SK-N-SH (cell line): ENCODE measurements at regions of chr10 and their contacts with region 1.

Region 1: GRCh38 chr10:42970451-42971250 is 106.2 kb upstream of the RET start:
- DNase-seq: peak; percentile 90
- H3K4me3 ChIP-seq: no peak overlapping the region
- H3K27ac ChIP-seq: peak overlapping the region; percentile 20 to 100; a peak in 3 of 4 replicates
- H3K4me1 ChIP-seq: peaks cover 0 to 59% of the 10 kb centered on the region in 2 experiments; a peak in 2 of 4 replicates
- H3K27me3 ChIP-seq: no peaks in the 10 kb centered on the region
- CTCF ChIP-seq: no peak
- EP300 ChIP-seq: peak; percentile 35 to 100; a peak in 3 of 4 replicates
- RAD21 ChIP-seq: peak; percentile 44; the same call in 1 of the 2 replicates

Region 2: GRCh38 chr10:42866115-42866995 is 104.3 kb before region 1 on chr10:
- CTCF ChIA-PET with region 1: interaction called, 20 read pairs
- POLR2A ChIA-PET with region 1: interaction called, 28 read pairs
- DNase-seq: peak; percentile 92
- H3K4me3 ChIP-seq: no peak overlapping the region
- H3K27ac ChIP-seq: peak overlapping the region in 1 of 2 experiments; percentile 74; a peak in 2 of 4 replicates
- H3K4me1 ChIP-seq: peaks cover 0 to 43% of the 10 kb centered on the region in 2 experiments; a peak in 2 of 4 replicates
- H3K27me3 ChIP-seq: no peaks in the 10 kb centered on the region
- CTCF ChIP-seq: peak; percentile 67
- EP300 ChIP-seq: no peak
- RAD21 ChIP-seq: peak; percentile 89

Region 3: DNA sequence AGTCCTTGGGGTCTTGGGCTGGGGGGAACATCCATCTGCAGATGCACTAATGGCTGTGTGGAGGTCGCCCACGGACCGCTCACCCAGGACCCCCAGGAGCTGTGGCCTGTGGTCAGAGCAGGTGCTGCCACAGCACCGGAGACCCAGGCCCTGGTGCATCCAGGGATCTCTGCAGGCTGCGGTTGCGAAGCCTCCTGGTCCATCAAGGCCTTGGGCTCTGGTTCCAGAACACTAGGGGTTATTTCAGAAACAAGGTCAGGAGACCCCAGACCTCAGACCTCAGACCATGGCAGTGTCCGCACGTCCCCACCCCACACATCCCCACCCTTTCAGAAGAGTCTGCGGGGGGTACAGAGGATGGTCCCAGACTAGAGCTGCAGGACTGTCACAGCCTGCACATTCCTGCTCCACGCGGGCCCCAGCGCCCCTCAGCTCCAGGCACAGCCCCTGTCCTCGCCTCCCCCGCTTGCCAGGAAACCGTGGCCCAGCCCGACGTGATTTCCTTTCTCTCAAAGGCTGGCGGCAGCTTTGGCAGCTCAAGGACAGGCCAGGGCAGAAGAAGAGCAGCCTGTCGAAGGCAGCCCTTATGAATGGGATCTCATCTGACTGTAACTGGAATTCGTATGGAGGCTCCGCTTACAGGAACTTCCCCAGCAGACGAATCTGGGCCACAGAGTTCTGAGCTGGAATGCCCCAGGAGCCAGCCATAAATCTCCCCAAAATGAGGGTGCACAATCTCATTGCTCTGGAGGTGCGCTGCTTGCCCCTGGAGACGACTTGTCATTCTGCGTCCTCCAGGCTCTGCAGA is 30.0 kb before region 1 on chr10:
- CTCF ChIA-PET with region 1: interaction called, 4 read pairs
- POLR2A ChIA-PET with region 1: interaction called, 12 read pairs
- DNase-seq: peak; percentile 60
- H3K4me3 ChIP-seq: no peak overlapping the region; a peak in 1 of 4 replicates
- H3K27ac ChIP-seq: peak overlapping the region in 1 of 2 experiments; percentile 83; a peak in 2 of 4 replicates
- H3K4me1 ChIP-seq: peaks cover 0 to 48% of the 10 kb centered on the region in 2 experiments; a peak in 2 of 4 replicates
- H3K27me3 ChIP-seq: no peaks in the 10 kb centered on the region
- CTCF ChIP-seq: no peak
- EP300 ChIP-seq: no peak
- RAD21 ChIP-seq: peak; percentile 3; the same call in 1 of the 2 replicates

Region 4: GRCh38 chr10:42981358-42982236 is 10.9 kb after region 1 on chr10:
- CTCF ChIA-PET with region 1: interaction called, 15 read pairs
- POLR2A ChIA-PET with region 1: interaction called, 48 read pairs
- DNase-seq: peak; percentile 87
- H3K4me3 ChIP-seq: no peak overlapping the region
- H3K27ac ChIP-seq: peak overlapping the region in 1 of 2 experiments; percentile 93; a peak in 2 of 4 replicates
- H3K4me1 ChIP-seq: peaks cover 0 to 65% of the 10 kb centered on the region in 2 experiments; a peak in 2 of 4 replicates
- H3K27me3 ChIP-seq: no peaks in the 10 kb centered on the region
- CTCF ChIP-seq: no peak
- EP300 ChIP-seq: peak in 1 of 2 experiments; percentile 95; a peak in 2 of 4 replicates
- RAD21 ChIP-seq: peak; percentile 21

Region 5: GRCh38 chr10:43070121-43071085 is 99.8 kb after region 1 on chr10:
- CTCF ChIA-PET with region 1: interaction called, 130 read pairs
- POLR2A ChIA-PET with region 1: interaction called, 75 read pairs
- DNase-seq: no peak
- H3K4me3 ChIP-seq: no peak overlapping the region
- H3K27ac ChIP-seq: peak overlapping the region in 1 of 2 experiments; percentile 88; a peak in 2 of 4 replicates
- H3K4me1 ChIP-seq: peaks cover 0 to 80% of the 10 kb centered on the region in 2 experiments; a peak in 1 of 4 replicates
- H3K27me3 ChIP-seq: no peaks in the 10 kb centered on the region
- CTCF ChIP-seq: no peak
- EP300 ChIP-seq: no peak
- RAD21 ChIP-seq: peak; percentile 8; the same call in 1 of the 2 replicates